ENCODE measurements at regions of chr7 and their contacts with region 1.

Region 1: DNA sequence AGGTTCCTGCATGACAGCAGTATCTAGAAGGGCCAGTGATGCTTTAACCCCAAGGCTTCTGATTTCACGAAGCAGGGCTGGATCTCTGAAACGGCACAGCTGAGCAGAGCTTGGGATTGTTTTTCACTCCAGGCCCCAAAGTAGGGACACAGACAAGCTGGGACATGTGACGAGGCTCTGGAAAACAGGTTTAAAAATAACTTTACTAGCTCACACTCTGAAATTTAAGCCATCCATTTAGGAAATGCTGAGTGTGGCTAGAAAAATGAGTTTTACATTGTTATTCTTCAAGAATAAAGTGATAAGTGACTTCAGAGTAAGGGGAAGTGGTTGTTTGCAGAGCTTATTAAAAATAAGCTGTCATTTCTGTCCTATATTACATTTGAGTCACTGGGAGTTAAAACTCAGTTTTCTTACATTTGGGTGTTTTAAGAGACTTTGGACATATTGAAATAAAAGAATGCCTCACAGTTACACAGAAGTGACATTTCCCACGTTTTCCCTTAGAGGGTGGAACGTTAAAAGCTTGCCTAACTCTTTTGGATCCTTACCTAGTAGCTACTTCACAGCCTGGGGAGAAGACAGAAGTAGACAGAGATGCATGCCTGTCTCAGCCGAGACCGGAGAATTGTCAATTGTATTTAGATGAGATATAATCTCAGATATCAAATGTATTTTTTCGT is 107.8 kb downstream of the GALNT17 start:
- DNase-seq: no peak
- H3K4me3 Mint-ChIP-seq: no peak overlapping the region
- H3K27ac Mint-ChIP-seq: no peak overlapping the region
- H3K4me1 Mint-ChIP-seq: no peaks in the 10 kb centered on the region
- H3K27me3 Mint-ChIP-seq: no peaks in the 10 kb centered on the region

Region 2: GRCh38 chr7:71182438-71182935 is 57.2 kb before region 1 on chr7:
- intact Hi-C with region 1: loop called (anchors 10 kb)
- DNase-seq: no peak
- H3K4me3 Mint-ChIP-seq: no peak overlapping the region
- H3K27ac Mint-ChIP-seq: no peak overlapping the region
- H3K4me1 Mint-ChIP-seq: no peaks in the 10 kb centered on the region
- H3K27me3 Mint-ChIP-seq: no peaks in the 10 kb centered on the region